Right ventricle myocardium inferior (tissue), 1 donor: ENCODE measurements at regions of chr12 and their contacts with region 1.

Region 1: DNA sequence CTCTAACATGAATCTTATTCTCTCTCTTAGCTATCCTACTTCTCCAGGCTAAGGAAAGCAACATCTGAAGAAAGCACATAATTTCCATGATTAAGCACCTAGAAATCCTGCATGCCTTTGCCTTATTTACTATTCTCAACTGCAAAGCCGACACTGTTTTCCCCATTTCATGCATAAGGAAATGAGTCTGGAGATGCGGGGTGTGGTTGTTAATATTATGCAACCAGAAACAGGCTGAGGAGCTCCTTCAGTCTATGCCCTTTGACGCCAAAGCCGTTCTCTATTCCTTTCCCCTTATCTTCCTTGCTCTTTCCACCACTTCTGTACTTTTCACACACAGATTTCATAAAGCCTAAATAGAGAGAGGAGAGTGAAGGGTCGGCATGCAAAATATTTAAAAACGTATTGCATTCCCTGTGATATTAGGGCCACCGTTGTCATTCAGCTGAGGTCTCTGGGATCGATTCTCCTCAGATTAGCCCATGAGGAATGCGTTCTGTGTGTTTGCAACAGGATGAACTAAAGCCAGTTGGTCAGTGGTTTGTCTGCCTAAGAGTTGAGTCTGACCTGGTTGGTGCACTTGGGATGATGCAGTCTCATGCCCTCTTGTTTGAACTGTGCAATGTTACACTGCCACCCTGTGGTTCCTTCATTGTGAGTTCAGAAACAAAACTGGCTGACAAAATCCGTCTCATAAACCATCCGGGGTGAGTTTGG is 53.1 kb upstream of the PLEKHG7 start:
- DNase-seq: no peak
- ATAC-seq: peak; percentile 93

Region 2: GRCh38 chr12:91361864-91362263 is 1287.8 kb before region 1 on chr12:
- intact Hi-C with region 1: loop called (anchors 5 kb)
- DNase-seq: no peak
- ATAC-seq: no peak

Region 3: GRCh38 chr12:91382081-91382543 is 1267.6 kb before region 1 on chr12:
- intact Hi-C with region 1: loop called (anchors 1 kb)
- DNase-seq: peak; percentile 78
- ATAC-seq: peak; percentile 89

Region 4: GRCh38 chr12:92363295-92364146 is 286.1 kb before region 1 on chr12:
- intact Hi-C with region 1: no loop called
- DNase-seq: no peak
- ATAC-seq: peak; percentile 80